ENCODE measurements at regions of chr17 and their contacts with region 1.

Region 1: GRCh38 chr17:1422907-1423306 is 22.9 kb upstream of the YWHAE start:
- DNase-seq: no peak
- H3K4me3 ChIP-seq: no peak overlapping the region
- H3K4me3 Mint-ChIP-seq: no peak overlapping the region
- H3K27ac ChIP-seq: no peak overlapping the region
- H3K27ac Mint-ChIP-seq: peak overlapping the region in 1 of 7 donors; percentile 51
- H3K4me1 ChIP-seq: no peaks in the 10 kb centered on the region
- H3K4me1 Mint-ChIP-seq: no peaks in the 10 kb centered on the region
- H3K27me3 ChIP-seq: no peaks in the 10 kb centered on the region
- H3K27me3 Mint-ChIP-seq: peaks cover 0 to 2% (median 0%) of the 10 kb centered on the region in 3 donors
- CTCF ChIP-seq: no peak

Region 2: DNA sequence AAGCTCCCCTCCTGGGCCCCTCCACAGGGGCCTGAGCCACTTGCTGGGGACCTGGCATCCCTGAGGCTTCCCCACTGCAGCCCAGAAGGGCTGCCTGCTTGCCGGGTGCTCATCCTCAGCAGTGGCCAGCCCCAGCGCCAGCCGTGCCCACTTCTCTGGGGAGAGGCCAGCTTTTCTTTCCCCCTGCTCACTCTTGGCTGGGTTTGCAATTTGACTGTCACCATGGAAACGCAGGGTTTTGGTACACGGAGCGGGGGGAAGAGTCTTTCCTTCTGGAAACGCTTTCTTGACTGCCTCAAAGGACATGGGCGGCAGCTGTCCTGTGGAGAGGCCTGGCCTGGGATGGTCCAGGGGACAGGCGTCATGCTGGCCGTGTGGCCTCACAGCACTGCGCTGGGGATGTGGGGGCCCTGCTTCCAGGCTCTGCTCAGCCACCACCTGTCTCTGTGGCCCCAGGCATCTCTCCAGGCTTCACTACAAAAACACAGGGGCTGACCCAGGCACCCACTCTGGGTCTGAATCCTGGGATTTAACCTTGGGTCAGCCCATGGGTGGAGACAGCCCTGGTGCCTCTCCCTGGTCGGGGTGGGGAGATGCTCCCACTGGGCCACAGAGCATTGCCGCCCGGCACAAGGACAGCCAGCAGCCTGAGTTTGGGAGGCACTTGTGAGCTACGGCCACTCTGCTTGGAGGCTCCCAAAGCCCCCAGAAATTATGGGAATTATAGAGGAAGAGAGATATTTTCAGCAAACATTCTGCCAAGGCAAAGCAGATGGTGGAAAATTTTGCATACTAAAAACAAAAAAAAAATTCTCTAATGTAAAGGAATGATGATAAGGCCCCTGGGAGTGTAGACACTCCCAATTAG is 1195.6 kb before region 1 on chr17:
- intact Hi-C with region 1: loop called in 1 of 2 experiments (anchors 10 kb)
- DNase-seq: no peak
- H3K4me3 ChIP-seq: no peak overlapping the region
- H3K4me3 Mint-ChIP-seq: no peak overlapping the region
- H3K27ac ChIP-seq: no peak overlapping the region
- H3K27ac Mint-ChIP-seq: no peak overlapping the region
- H3K4me1 ChIP-seq: peaks cover under 1 to 2% of the 10 kb centered on the region in 2 donors
- H3K4me1 Mint-ChIP-seq: peaks cover under 1% of the 10 kb centered on the region
- H3K27me3 ChIP-seq: no peaks in the 10 kb centered on the region
- H3K27me3 Mint-ChIP-seq: peaks cover 6 to 8% (median 8%) of the 10 kb centered on the region in 3 donors
- CTCF ChIP-seq: no peak